ENCODE measurements at regions of chr17 and their contacts with region 1.

Region 1: DNA sequence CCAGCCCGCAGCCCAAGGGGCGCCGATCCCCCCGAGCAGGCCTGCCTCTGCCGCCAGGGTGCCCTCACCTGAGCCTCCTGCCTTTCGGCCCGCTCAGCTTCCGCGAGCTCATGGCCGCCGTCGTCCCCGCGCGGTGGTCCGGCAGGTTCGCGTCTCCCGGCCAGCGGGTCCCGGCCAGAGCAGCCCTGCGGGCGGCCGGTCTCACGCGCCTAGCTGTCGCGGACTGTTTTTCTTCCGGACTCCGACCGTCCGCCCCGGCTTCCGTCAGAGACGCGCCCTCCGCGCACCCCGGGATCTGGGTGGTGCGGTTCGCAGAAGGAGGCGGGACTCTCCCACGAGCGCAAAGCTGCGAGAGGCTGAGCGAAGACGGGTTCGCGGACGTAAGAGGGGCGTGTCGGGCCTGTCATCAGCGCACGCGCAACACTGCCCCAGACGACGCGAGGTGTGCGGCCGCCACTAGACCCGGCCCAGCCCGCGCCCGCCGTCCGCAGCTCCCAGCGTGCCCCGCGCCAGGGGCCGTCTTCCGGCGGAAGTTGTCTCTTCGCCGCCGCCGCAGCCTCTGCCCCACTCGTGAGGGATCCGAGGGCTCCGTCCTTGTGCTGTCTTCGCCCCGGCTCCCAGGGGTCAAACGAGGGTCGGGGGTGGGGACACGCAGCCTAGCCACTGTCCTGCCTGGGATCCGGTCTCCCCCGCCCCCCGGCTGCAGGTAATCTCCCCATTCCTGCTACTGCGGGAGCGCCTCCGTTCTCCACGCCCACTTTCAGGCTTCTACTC is at the start of gene INPP5K:
- DNase-seq: peak; percentile 97
- H3K4me3 Mint-ChIP-seq: peak within 1 kb of the TSS; percentile 77
- H3K27ac Mint-ChIP-seq: peak within 1 kb of the TSS; percentile 82
- H3K4me1 Mint-ChIP-seq: peaks cover 22% of the 10 kb centered on the region
- H3K27me3 Mint-ChIP-seq: no peaks in the 10 kb centered on the region
- CTCF ChIP-seq: no peak
- total RNA-seq, gene INPP5K: 25.5 and 28.9 TPM in 2 replicates

Region 2: GRCh38 chr17:1260086-1260769 is 256.3 kb before region 1 on chr17:
- CTCF ChIA-PET with region 1: interaction called, 5 read pairs
- POLR2A ChIA-PET with region 1: interaction called, 8 read pairs
- intact Hi-C with region 1: loop called (anchors 1 kb)
- DNase-seq: no peak
- H3K4me3 Mint-ChIP-seq: peak overlapping the region; percentile 72
- H3K27ac Mint-ChIP-seq: no peak overlapping the region
- H3K4me1 Mint-ChIP-seq: no peaks in the 10 kb centered on the region
- H3K27me3 Mint-ChIP-seq: no peaks in the 10 kb centered on the region
- CTCF ChIP-seq: no peak

Region 3: DNA sequence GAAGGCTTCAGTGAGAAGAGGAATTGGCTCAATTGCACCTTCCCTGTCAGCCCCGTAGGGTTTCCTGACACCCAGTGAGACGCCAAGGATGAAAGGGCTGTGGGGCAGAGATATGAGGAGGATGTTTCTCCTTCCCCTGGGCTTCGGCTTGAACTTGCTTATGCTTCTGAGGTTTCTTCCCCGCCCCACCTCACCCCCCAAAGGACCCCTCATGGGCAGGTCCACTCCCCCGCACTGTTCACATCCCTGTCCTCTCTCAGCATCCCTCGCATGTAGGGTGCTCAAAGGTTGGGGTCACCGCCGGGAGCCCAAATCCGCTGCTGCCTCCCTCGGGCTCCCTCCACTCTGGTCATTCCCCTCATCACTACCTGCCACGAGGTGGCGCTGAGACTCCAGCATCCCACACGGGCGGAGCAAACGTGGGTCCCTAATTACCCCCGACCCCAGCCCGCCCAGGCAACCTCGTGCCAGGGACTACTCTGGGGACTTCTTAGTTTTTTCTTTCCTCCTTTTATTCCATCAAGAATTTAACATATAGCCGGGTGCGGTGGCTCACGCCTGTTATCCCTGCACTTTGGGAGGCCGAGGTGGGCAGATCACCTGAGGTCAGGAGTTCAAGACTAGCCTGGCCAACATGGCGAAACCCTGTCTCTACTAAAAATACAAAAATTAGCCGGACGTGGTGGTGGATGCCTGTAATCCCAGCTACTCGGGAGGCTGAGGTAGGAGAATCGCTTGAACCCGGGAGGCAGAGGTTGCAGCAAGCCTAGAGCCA is 240.4 kb before region 1 on chr17:
- CTCF ChIA-PET with region 1: interaction called, 5 read pairs
- POLR2A ChIA-PET with region 1: interaction called, 5 read pairs
- intact Hi-C with region 1: loop called (anchors 1 kb)
- DNase-seq: peak; percentile 58
- H3K4me3 Mint-ChIP-seq: no peak overlapping the region
- H3K27ac Mint-ChIP-seq: no peak overlapping the region
- H3K4me1 Mint-ChIP-seq: no peaks in the 10 kb centered on the region
- H3K27me3 Mint-ChIP-seq: no peaks in the 10 kb centered on the region
- CTCF ChIP-seq: peak; percentile 82

Region 4: GRCh38 chr17:1399679-1400512 is 116.7 kb before region 1 on chr17 and contains the start of gene YWHAE:
- CTCF ChIA-PET with region 1: interaction called, 3 read pairs
- POLR2A ChIA-PET with region 1: interaction called, 24 read pairs
- intact Hi-C with region 1: no loop called
- DNase-seq: peak; percentile 96
- H3K4me3 Mint-ChIP-seq: peak within 1 kb of the TSS; percentile 92
- H3K27ac Mint-ChIP-seq: peak within 1 kb of the TSS; percentile 100
- H3K4me1 Mint-ChIP-seq: peaks cover 11% of the 10 kb centered on the region
- H3K27me3 Mint-ChIP-seq: no peaks in the 10 kb centered on the region
- CTCF ChIP-seq: no peak
- total RNA-seq, gene YWHAE: 813 and 886 TPM in 2 replicates

Region 5: DNA sequence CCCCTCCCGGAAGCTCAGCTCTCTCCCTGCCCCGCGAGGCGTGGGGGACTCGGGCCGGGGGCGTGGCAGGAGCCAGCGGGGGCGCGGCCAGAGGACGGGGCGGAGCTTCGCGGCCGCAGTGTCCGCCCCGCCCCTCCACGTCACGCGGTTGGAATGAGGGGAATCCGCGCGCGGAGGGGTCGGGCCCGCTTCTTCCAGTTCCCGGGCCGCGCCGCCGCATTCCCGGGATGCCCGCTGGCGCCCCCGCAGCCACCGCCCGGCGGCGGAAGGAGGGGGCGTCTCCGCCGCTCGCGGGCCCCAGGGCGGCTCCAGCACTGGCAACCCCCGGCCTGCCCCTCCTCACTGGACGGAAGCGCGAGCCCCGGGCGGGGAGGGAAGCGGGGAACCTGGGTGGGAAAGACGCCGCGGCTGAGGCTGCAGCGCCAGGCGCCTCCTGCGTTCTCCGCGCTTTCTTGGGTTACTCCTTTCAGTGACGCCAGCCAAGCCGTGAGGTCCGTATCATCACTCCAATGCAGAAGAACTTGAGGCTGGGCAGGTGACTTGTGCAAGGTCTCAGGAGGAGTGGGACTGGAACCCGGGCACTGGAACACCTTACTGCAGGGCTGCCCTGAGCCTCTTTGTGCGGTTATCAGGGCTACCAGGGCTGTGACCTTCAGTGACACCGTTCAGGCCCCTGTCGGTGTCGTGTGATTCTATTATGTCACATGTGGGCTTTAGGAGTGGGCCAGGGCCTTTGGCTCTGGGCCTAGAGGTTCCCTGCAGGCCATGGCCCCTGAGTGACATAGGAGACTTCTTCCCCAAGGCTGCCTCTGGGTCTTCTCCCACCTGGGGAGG is 28.3 kb before region 1 on chr17:
- CTCF ChIA-PET with region 1: interaction called, 12 read pairs
- POLR2A ChIA-PET with region 1: interaction called, 45 read pairs
- intact Hi-C with region 1: no loop called
- DNase-seq: peak; percentile 69
- H3K4me3 Mint-ChIP-seq: peak overlapping the region; percentile 73
- H3K27ac Mint-ChIP-seq: peak overlapping the region; percentile 75
- H3K4me1 Mint-ChIP-seq: peaks cover 17% of the 10 kb centered on the region
- H3K27me3 Mint-ChIP-seq: no peaks in the 10 kb centered on the region
- CTCF ChIP-seq: no peak

Region 6: DNA sequence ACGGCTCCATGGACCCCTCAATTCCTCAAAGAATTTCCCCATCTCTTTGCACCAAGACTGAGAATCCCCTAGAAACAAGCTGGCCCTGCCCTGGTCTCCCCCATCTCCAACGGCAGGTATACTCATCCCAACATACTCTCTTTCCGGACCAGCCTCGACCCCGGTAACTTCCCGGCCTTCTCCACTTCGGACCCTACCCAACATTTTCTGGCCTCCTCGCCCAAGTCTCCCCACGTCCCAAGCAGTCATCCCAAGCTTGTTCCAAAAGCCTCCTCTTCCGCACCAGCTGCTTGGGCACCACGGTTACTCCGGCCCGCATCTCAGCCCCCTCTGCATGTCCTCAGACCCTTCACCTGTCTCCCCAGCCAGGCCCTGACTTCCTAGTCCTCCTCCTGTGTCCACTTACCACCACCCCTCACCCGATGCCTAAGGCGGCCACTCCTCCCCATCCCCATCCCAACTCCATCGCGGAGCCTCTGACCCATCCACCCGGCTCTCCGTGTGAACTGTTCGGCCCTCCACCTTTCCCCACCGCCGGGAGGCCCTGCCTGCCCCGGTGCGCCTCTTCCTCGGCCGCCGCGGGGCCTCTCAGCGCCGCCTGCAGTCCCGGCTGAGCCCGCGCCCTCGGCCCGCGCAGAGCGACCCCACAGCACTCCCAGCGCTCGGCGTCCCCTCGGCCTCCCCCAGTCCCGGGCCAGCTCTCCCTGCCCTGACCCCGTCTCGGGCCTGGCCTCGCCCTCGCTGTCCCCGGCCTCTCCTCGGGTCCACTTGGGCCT is 45.0 kb after region 1 on chr17:
- CTCF ChIA-PET with region 1: interaction called, 3 read pairs
- POLR2A ChIA-PET with region 1: interaction called, 13 read pairs
- intact Hi-C with region 1: no loop called
- DNase-seq: no peak
- H3K4me3 Mint-ChIP-seq: peak overlapping the region; percentile 90
- H3K27ac Mint-ChIP-seq: peak overlapping the region; percentile 97
- H3K4me1 Mint-ChIP-seq: peaks cover 14% of the 10 kb centered on the region
- H3K27me3 Mint-ChIP-seq: no peaks in the 10 kb centered on the region
- CTCF ChIP-seq: peak; percentile 11

Region 7: DNA sequence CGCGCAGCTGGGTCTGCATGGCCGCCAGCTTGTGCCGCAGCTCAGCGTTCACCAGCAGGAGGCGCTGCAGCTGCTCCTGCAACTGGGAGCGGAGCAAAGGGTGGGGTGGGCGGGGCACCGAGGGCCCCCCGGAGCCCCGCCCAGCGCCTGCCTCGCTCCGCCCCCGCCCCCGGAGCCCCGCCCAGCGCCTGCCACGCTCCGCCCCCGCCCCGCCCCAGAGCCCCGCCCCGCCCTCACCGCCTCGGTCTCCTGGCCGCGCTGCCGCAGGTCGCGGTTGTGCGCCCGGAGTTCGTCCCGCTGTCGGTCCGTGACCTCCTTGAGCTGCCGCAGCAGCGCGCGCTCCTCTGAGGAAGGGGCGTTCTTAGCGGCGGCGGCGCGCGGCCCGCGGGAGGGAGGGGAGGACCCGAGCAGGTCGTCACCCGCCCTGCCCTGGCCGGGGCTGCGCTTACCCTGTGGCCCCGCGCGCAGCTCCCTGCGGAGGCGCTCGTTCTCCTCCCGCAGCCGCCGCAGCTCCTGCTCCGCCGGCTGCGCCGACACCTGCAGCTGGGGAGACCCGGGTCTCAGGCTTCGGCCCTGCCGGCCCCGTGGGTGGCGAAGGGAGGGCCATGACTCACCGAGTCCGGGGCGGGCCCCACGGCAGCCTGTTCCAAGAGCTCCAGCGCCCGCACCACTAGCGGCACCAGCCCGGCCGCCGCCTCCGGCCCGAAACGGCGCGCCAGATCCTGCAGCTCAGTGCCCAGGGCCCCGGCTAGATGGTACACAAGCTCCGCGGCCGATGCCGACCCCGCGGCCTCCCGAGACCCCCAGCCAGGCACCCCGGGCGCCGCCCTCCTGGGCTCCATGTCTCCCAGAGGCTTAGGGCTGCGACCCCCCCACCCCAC is 132.6 kb after region 1 on chr17:
- CTCF ChIA-PET with region 1: no interaction called
- POLR2A ChIA-PET with region 1: interaction called, 17 read pairs
- intact Hi-C with region 1: no loop called
- DNase-seq: peak; percentile 89
- H3K4me3 Mint-ChIP-seq: peak overlapping the region; percentile 70
- H3K27ac Mint-ChIP-seq: peak overlapping the region; percentile 23
- H3K4me1 Mint-ChIP-seq: peaks cover 4% of the 10 kb centered on the region
- H3K27me3 Mint-ChIP-seq: no peaks in the 10 kb centered on the region
- CTCF ChIP-seq: peak; percentile 82

Region 8: GRCh38 chr17:1839516-1839915 is 322.9 kb after region 1 on chr17:
- CTCF ChIA-PET with region 1: no interaction called
- POLR2A ChIA-PET with region 1: no interaction called
- intact Hi-C with region 1: no loop called
- DNase-seq: no peak
- H3K4me3 Mint-ChIP-seq: no peak overlapping the region
- H3K27ac Mint-ChIP-seq: no peak overlapping the region
- H3K4me1 Mint-ChIP-seq: peaks cover 6% of the 10 kb centered on the region
- H3K27me3 Mint-ChIP-seq: no peaks in the 10 kb centered on the region
- CTCF ChIP-seq: no peak

Measured in MCF 10A (cell line).